OCI-LY7 (cell line): ENCODE measurements at regions of chr10 and their contacts with region 1.

Region 1: GRCh38 chr10:2619916-2620315 is 447.4 kb upstream of the PFKP start:
- DNase-seq: no peak
- H3K4me3 ChIP-seq: no peak overlapping the region
- H3K27ac ChIP-seq: no peak overlapping the region
- H3K4me1 ChIP-seq: no peaks in the 10 kb centered on the region
- CTCF ChIP-seq: no peak

Region 2: GRCh38 chr10:2680821-2681220 is 60.9 kb after region 1 on chr10:
- CTCF ChIA-PET with region 1: no interaction called
- POLR2A ChIA-PET with region 1: no interaction called
- intact Hi-C with region 1: no loop called
- DNase-seq: no peak
- H3K4me3 ChIP-seq: no peak overlapping the region
- H3K27ac ChIP-seq: no peak overlapping the region
- H3K4me1 ChIP-seq: no peaks in the 10 kb centered on the region
- CTCF ChIP-seq: no peak

Region 3: DNA sequence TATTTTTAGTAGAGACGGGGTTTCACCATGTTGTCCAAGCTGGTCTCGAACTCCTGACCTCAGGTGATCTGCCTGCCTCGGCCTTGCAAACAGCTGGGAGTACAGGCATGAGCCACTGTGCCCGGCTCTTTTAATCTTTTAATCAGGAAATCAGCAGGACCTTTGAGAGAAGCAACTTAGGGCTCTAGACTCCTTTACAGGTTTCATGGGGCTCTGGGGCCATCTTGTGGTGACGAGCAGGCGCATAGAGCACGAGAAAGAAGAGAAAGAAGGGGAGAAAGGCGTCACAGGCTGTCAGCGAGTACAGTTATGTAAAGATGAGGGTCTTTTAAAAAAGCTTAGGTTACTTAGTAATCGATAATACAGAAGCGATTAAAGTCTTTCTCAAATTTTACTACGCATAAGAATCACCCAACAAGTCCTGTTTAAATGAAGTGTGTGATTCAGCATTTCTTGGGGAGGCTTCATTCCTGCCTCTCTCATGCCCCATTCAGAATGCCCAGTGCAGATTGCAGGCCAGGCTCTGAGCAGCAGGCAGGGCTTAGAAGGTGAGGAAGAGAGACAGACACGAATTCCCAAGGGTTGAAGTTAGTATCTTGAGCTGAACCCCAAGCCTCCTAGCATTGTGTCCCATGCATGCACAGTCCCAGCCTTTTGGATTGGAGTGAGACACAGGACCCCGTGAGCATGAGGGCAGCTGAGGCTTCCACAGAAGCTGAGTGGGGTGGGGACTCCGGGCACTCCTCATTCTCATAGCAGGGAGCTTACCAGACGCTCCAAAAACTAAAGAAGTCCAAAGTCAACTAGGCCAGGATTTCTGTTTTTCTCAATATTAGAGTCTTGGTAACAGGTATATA is 423.8 kb after region 1 on chr10:
- CTCF ChIA-PET with region 1: no interaction called
- POLR2A ChIA-PET with region 1: no interaction called
- intact Hi-C with region 1: loop called (anchors 5 kb)
- DNase-seq: peak; percentile 57
- H3K4me3 ChIP-seq: no peak overlapping the region
- H3K27ac ChIP-seq: no peak overlapping the region
- H3K4me1 ChIP-seq: no peaks in the 10 kb centered on the region
- CTCF ChIP-seq: peak; percentile 79

Region 4: DNA sequence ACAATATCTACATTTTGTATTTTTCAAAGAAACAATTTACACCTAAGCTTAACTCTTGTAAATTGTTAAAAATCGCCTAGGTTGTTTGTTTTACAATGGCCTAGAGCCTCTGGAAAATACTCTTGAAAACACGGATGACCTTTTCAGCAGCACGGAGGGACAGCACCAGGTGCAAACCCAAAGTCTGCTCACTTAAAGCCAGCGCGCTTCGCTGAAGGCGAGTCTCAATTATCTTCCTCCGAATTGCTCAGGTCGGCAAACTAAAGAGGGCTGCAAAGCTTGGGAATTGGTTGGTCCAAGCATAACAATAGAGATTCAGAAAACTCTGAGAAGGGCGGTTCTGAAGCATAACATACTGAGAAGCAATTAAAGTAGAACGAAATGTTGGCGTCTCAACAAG is 692.5 kb after region 1 on chr10:
- CTCF ChIA-PET with region 1: no interaction called
- POLR2A ChIA-PET with region 1: no interaction called
- intact Hi-C with region 1: no loop called
- DNase-seq: no peak
- H3K4me3 ChIP-seq: no peak overlapping the region
- H3K27ac ChIP-seq: no peak overlapping the region
- H3K4me1 ChIP-seq: no peaks in the 10 kb centered on the region
- CTCF ChIP-seq: no peak